Activated CD8-positive, alpha-beta T cell treated with anti-CD3 and anti-CD28 coated beads, Interleukin-2, amount 10 ng/mL, durations not matched to agents 7 days and 5 days (primary cell): ENCODE measurements at regions of chr15 and their contacts with region 1.

Region 1: DNA sequence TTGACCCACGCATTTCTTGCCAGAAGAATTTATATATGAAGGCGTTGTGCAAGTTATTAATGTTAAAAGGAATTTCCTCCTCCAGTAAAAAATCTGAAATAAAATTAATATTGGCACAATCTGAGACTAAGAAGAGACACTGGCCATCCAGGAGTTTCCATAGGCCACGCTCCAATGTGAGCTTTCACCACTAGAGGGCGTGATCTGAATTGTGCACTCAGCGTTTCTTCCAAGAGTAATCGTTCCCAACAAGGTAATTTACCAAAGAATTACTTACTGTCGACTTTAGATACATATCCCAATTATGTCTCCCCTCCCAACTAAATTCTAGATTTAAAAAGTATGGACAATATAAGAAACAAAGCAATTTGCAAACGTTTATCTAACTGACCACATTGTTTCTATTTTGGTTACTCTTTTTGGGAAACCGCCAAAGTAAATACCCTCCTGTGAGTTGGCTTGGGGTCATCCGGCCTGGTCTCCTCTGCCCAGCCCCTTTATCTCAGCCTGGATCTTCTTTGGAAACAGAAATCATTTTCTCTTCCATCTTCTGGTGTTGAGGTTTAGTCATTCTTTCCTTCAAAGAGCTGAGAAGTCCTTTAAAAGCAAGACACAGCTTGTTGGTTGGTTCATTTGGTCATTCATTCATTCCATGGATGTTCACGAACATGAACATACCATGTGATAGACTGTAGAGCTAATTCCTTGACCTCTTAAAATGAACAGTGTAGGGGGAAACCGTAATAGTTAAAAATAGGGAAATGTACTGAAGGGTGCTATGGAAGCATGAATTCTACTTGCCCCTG is 26.2 kb downstream of the POLR2M start:
- DNase-seq: peak; percentile 57
- ATAC-seq: peak; percentile 69
- H3K4me3 Mint-ChIP-seq: no peak overlapping the region
- H3K27ac Mint-ChIP-seq: no peak overlapping the region
- H3K4me1 Mint-ChIP-seq: no peaks in the 10 kb centered on the region
- H3K27me3 Mint-ChIP-seq: no peaks in the 10 kb centered on the region

Region 2: GRCh38 chr15:57706405-57707209 is 26.1 kb before region 1 on chr15 and contains the start of gene POLR2M:
- CTCF ChIA-PET with region 1: interaction called, 30 read pairs
- POLR2A ChIA-PET with region 1: interaction called, 4 read pairs
- DNase-seq: peak; percentile 95
- ATAC-seq: peak; percentile 90
- H3K4me3 Mint-ChIP-seq: peak within 1 kb of the TSS; percentile 90
- H3K27ac Mint-ChIP-seq: peak within 1 kb of the TSS; percentile 87
- H3K4me1 Mint-ChIP-seq: peaks cover 58% of the 10 kb centered on the region
- H3K27me3 Mint-ChIP-seq: peaks cover 9% of the 10 kb centered on the region
- total RNA-seq, gene POLR2M: 61.8 to 74.8 TPM

Region 3: DNA sequence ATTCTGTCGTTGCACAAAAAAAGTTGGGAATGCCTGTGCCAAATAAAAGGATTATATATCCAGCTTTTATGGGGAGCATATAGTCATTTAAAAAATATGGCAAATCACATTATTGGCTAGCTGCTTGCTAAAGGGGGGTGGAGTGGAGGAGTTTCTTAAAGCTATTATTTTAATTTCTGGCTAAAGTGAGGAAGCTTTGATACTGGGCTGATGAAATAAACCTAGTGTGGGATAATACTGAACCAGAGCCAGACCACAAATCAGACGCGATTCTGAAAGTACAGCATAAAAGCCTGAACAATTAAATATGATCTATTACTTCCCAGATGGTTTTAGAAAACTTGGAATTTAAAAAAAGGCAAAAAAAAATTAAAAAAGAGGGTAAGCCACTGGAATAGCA is 11.9 kb before region 1 on chr15:
- CTCF ChIA-PET with region 1: interaction called, 28 read pairs
- POLR2A ChIA-PET with region 1: no interaction called
- DNase-seq: no peak
- ATAC-seq: no peak
- H3K4me3 Mint-ChIP-seq: no peak overlapping the region
- H3K27ac Mint-ChIP-seq: no peak overlapping the region
- H3K4me1 Mint-ChIP-seq: no peaks in the 10 kb centered on the region
- H3K27me3 Mint-ChIP-seq: no peaks in the 10 kb centered on the region

Region 4: GRCh38 chr15:57743424-57743823 is 10.7 kb after region 1 on chr15:
- CTCF ChIA-PET with region 1: interaction called, 65 read pairs
- POLR2A ChIA-PET with region 1: interaction called, 3 read pairs
- DNase-seq: no peak
- ATAC-seq: no peak
- H3K4me3 Mint-ChIP-seq: no peak overlapping the region
- H3K27ac Mint-ChIP-seq: no peak overlapping the region
- H3K4me1 Mint-ChIP-seq: peaks cover 8% of the 10 kb centered on the region
- H3K27me3 Mint-ChIP-seq: no peaks in the 10 kb centered on the region

Region 5: GRCh38 chr15:57751177-57751800 is 18.6 kb after region 1 on chr15:
- CTCF ChIA-PET with region 1: interaction called, 65 read pairs
- POLR2A ChIA-PET with region 1: no interaction called
- DNase-seq: no peak
- ATAC-seq: no peak
- H3K4me3 Mint-ChIP-seq: no peak overlapping the region
- H3K27ac Mint-ChIP-seq: no peak overlapping the region
- H3K4me1 Mint-ChIP-seq: peaks cover 8% of the 10 kb centered on the region
- H3K27me3 Mint-ChIP-seq: no peaks in the 10 kb centered on the region

Region 6: DNA sequence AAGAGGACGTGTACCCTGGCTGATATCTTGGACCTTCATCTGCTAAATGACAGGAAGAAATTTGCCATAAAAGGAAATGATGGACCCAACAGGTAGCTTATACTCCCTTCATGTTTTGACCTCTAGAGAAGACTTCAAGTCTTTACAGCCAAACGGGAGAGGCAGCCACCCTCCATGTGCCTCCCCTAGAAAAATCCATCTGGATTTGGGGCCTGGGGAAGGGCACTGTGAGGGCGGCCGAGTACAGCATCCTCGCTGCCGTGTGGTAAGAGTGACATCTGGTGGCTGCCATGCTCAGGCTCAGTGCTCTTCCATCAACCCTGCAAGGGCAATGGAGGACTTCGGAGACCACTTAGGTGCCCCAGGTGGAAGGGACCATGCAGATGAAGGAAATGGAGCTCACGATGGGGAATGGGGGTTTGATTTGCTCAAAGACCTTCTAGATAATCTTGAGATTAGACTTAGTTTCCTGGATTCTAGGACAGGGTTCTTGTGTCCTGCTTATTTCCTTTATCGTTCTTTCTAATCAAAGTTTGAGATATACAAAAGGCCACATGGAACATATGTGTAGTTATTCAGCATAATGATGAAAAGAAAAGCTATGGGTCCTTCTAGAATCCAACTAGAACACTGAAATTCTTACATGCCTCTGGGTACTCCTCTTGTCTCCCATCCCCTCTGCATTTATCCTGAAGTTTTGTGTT is 449.9 kb after region 1 on chr15:
- CTCF ChIA-PET with region 1: interaction called, 10 read pairs
- POLR2A ChIA-PET with region 1: no interaction called
- DNase-seq: peak; percentile 40
- ATAC-seq: peak; percentile 73
- H3K4me3 Mint-ChIP-seq: no peak overlapping the region
- H3K27ac Mint-ChIP-seq: no peak overlapping the region
- H3K4me1 Mint-ChIP-seq: peaks cover 6% of the 10 kb centered on the region
- H3K27me3 Mint-ChIP-seq: peaks cover 24% of the 10 kb centered on the region